HCT116 (cell line): ENCODE measurements at regions of chr6 and their contacts with region 1.

Region 1: GRCh38 chr6:97925504-97925903 is 642.5 kb upstream of the MMS22L start:
- DNase-seq: no peak
- ATAC-seq: no peak; the same call in 1 of the 2 replicates
- H3K4me3 ChIP-seq: no peak overlapping the region
- H3K27ac ChIP-seq: no peak overlapping the region
- H3K4me1 ChIP-seq: no peaks in the 10 kb centered on the region
- H3K27me3 ChIP-seq: peaks cover 11% of the 10 kb centered on the region; the same call in 1 of the 2 replicates
- CTCF ChIP-seq: peak in 1 of 3 experiments; percentile 24; a peak in 1 of 6 replicates
- POLR2A ChIP-seq: no peak
- RAD21 ChIP-seq: peak; percentile 42

Region 2: GRCh38 chr6:97186416-97186999 is 739.0 kb before region 1 on chr6:
- CTCF ChIA-PET with region 1: no interaction called
- POLR2A ChIA-PET with region 1: no interaction called
- RAD21 ChIA-PET with region 1: no interaction called
- intact Hi-C with region 1: loop called (anchors 10 kb)
- DNase-seq: peak; percentile 42
- ATAC-seq: peak; percentile 90
- H3K4me3 ChIP-seq: no peak overlapping the region
- H3K27ac ChIP-seq: no peak overlapping the region
- H3K4me1 ChIP-seq: no peaks in the 10 kb centered on the region
- H3K27me3 ChIP-seq: no peaks in the 10 kb centered on the region
- CTCF ChIP-seq: peak; percentile 65 to 97 (median 87); a peak in 5 of 6 replicates
- POLR2A ChIP-seq: no peak
- RAD21 ChIP-seq: peak; percentile 77

Region 3: DNA sequence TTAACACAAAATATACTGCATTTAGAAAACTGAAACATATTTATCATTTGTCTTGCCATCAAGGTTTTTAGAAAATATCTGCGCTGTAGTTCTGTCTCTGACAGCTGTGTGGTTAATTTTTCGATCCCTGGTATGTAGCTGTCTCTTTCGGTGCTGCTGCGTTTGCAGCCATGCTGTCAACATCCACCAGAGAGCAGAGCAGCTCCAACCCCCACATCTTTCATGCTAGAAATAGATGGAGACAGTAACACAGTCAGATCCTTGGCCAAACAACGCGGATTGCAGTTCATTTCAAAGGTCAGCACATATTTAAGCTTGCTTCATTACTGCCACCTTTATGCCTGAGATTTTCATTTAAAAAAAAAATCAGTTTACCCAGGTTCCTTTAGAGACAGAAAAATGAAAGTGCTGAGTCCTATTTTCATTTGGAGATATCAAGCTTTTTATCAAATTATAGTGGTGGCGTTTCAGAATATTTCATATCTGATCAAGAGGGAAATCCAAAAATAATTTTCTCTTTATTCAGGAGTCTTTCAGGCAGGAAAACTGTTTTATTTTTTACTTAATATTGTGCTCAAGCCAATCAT is 484.8 kb before region 1 on chr6:
- CTCF ChIA-PET with region 1: interaction called, 15 read pairs
- POLR2A ChIA-PET with region 1: no interaction called
- RAD21 ChIA-PET with region 1: no interaction called
- intact Hi-C with region 1: no loop called
- DNase-seq: peak; percentile 46
- ATAC-seq: peak; percentile 99
- H3K4me3 ChIP-seq: peak overlapping the region in 1 of 2 experiments; percentile 7; a peak in 1 of 4 replicates
- H3K27ac ChIP-seq: no peak overlapping the region
- H3K4me1 ChIP-seq: peaks cover 0 to 6% of the 10 kb centered on the region in 2 experiments; a peak in 1 of 4 replicates
- H3K27me3 ChIP-seq: no peaks in the 10 kb centered on the region
- CTCF ChIP-seq: peak; percentile 32 to 71 (median 69); a peak in 5 of 6 replicates
- POLR2A ChIP-seq: no peak
- RAD21 ChIP-seq: peak; percentile 52